ENCODE measurements at regions of chr2 and their contacts with region 1.

Region 1: GRCh38 chr2:19538405-19538963 is 180.1 kb upstream of the OSR1 start:
- DNase-seq: peak; percentile 99
- ATAC-seq: peak; percentile 73
- H3K4me3 ChIP-seq: 0 out of 2 replicates have a peak overlapping the region, but pooled peaks have one; percentile 31
- H3K27ac ChIP-seq: peak overlapping the region; percentile 98
- H3K4me1 ChIP-seq: peaks cover 57% of the 10 kb centered on the region
- H3K27me3 ChIP-seq: no peaks in the 10 kb centered on the region
- CTCF ChIP-seq: no peak

Region 2: DNA sequence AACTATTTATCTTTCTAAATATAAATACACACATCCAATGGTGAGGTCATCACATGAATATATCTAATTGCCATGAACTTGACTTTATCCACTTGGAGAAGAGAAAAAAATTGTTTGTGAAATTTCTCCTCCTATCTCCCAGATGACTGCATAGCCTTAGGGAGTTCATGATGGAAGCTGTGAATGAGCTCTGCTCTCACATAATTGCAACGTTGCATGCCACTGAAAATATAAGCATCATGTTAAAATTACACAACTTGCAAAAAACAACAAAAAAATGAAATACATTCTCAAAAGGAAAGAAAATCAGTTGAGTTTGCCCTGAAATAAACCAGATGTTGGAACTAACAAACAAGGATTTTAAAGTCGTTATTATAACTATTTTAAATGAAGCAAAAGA is 129.4 kb before region 1 on chr2:
- CTCF ChIA-PET with region 1: no interaction called
- POLR2A ChIA-PET with region 1: no interaction called
- intact Hi-C with region 1: loop called (anchors 10 kb)
- DNase-seq: no peak
- ATAC-seq: no peak
- H3K4me3 ChIP-seq: no peak overlapping the region
- H3K27ac ChIP-seq: no peak overlapping the region
- H3K4me1 ChIP-seq: no peaks in the 10 kb centered on the region
- H3K27me3 ChIP-seq: no peaks in the 10 kb centered on the region
- CTCF ChIP-seq: no peak

Region 3: GRCh38 chr2:19568809-19569791 is 30.6 kb after region 1 on chr2:
- CTCF ChIA-PET with region 1: interaction called, 6 read pairs
- POLR2A ChIA-PET with region 1: interaction called, 11 read pairs
- intact Hi-C with region 1: loop called (anchors 1 kb)
- DNase-seq: peak; percentile 84
- ATAC-seq: peak; percentile 96
- H3K4me3 ChIP-seq: peak overlapping the region; percentile 20; the same call in 1 of the 2 replicates
- H3K27ac ChIP-seq: peak overlapping the region; percentile 76
- H3K4me1 ChIP-seq: peaks cover 15% of the 10 kb centered on the region
- H3K27me3 ChIP-seq: no peaks in the 10 kb centered on the region
- CTCF ChIP-seq: no peak

Region 4: GRCh38 chr2:19611491-19612332 is 73.2 kb after region 1 on chr2:
- CTCF ChIA-PET with region 1: interaction called, 3 read pairs
- POLR2A ChIA-PET with region 1: interaction called, 4 read pairs
- intact Hi-C with region 1: loop called (anchors 2 kb)
- DNase-seq: peak; percentile 96
- ATAC-seq: peak; percentile 88
- H3K4me3 ChIP-seq: no peak overlapping the region
- H3K27ac ChIP-seq: peak overlapping the region; percentile 93
- H3K4me1 ChIP-seq: peaks cover 32% of the 10 kb centered on the region
- H3K27me3 ChIP-seq: no peaks in the 10 kb centered on the region
- CTCF ChIP-seq: no peak

Region 5: GRCh38 chr2:19667085-19667484 is 128.6 kb after region 1 on chr2:
- CTCF ChIA-PET with region 1: no interaction called
- POLR2A ChIA-PET with region 1: no interaction called
- intact Hi-C with region 1: loop called (anchors 1 kb)
- DNase-seq: peak; percentile 75
- ATAC-seq: peak; percentile 58
- H3K4me3 ChIP-seq: no peak overlapping the region
- H3K27ac ChIP-seq: no peak overlapping the region
- H3K4me1 ChIP-seq: peaks cover 26% of the 10 kb centered on the region
- H3K27me3 ChIP-seq: no peaks in the 10 kb centered on the region
- CTCF ChIP-seq: peak; percentile 74

Measured in PC-3 (cell line).